Transverse colon (tissue), 4 donors: ENCODE measurements at regions of chr7 and their contacts with region 1.

Region 1: GRCh38 chr7:55207436-55208125 is 157.6 kb upstream of the LANCL2 start:
- DNase-seq: no peak
- H3K4me3 ChIP-seq: no peak overlapping the region
- H3K27ac ChIP-seq: no peak overlapping the region
- H3K4me1 ChIP-seq: peaks cover 5 to 14% (median 9%) of the 10 kb centered on the region in 4 donors
- H3K27me3 ChIP-seq: no peaks in the 10 kb centered on the region
- CTCF ChIP-seq: no peak
- EP300 ChIP-seq: no peak
- POLR2A ChIP-seq: no peak

Region 2: GRCh38 chr7:55033241-55033846 is 174.2 kb before region 1 on chr7:
- in situ Hi-C with region 1: no loop called
- intact Hi-C with region 1: no loop called
- DNase-seq: no peak
- H3K4me3 ChIP-seq: no peak overlapping the region
- H3K27ac ChIP-seq: no peak overlapping the region
- H3K4me1 ChIP-seq: peaks cover 6 to 29% (median 11%) of the 10 kb centered on the region in 4 donors
- H3K27me3 ChIP-seq: no peaks in the 10 kb centered on the region
- CTCF ChIP-seq: no peak
- EP300 ChIP-seq: no peak
- POLR2A ChIP-seq: no peak

Region 3: GRCh38 chr7:55164527-55164926 is 43.1 kb before region 1 on chr7:
- in situ Hi-C with region 1: no loop called
- intact Hi-C with region 1: loop called (anchors 1 kb)
- DNase-seq: no peak
- H3K4me3 ChIP-seq: no peak overlapping the region
- H3K27ac ChIP-seq: no peak overlapping the region
- H3K4me1 ChIP-seq: no peaks in the 10 kb centered on the region
- H3K27me3 ChIP-seq: no peaks in the 10 kb centered on the region
- CTCF ChIP-seq: no peak
- EP300 ChIP-seq: no peak
- POLR2A ChIP-seq: no peak